Activated CD4-positive, alpha-beta memory T cell treated with anti-CD3 and anti-CD28 coated beads for 36 hours (primary cell): ENCODE measurements at regions of chr11 and their contacts with region 1.

Region 1: DNA sequence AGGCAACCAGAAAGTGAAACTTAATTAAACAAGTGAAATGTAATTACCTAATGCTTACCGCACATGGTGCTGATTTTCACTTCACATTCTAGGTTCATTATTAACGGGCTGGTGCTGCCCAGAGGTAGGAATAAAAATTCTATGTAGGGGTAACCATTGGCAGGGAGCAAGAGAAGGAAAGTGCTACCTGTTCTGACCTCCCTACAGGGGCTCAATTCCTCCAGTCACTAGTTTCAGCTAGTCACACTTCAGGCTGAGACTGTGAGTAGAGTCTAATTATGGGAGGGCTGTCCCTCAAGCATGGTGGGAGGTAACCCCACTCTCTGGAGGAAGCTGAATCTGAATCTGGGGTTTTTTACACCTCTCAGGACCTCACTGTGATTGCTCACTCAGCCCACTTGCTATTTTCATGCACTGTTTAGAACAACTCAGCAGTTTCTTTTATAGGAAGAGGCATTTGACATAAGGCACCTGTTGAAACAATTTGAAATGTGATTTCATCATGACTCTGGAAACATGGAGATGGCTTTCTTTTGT is 75.4 kb downstream of the MAML2 start:
- DNase-seq: peak; percentile 71
- H3K4me3 Mint-ChIP-seq: peak overlapping the region; percentile 42
- H3K27ac Mint-ChIP-seq: peak overlapping the region; percentile 84
- H3K4me1 Mint-ChIP-seq: peaks cover 90% of the 10 kb centered on the region
- H3K27me3 Mint-ChIP-seq: no peaks in the 10 kb centered on the region

Region 2: GRCh38 chr11:96098514-96099241 is 168.9 kb before region 1 on chr11:
- CTCF ChIA-PET with region 1: no interaction called
- POLR2A ChIA-PET with region 1: no interaction called
- intact Hi-C with region 1: no loop called
- DNase-seq: no peak
- H3K4me3 Mint-ChIP-seq: no peak overlapping the region
- H3K27ac Mint-ChIP-seq: no peak overlapping the region
- H3K4me1 Mint-ChIP-seq: peaks cover 41% of the 10 kb centered on the region
- H3K27me3 Mint-ChIP-seq: no peaks in the 10 kb centered on the region

Region 3: DNA sequence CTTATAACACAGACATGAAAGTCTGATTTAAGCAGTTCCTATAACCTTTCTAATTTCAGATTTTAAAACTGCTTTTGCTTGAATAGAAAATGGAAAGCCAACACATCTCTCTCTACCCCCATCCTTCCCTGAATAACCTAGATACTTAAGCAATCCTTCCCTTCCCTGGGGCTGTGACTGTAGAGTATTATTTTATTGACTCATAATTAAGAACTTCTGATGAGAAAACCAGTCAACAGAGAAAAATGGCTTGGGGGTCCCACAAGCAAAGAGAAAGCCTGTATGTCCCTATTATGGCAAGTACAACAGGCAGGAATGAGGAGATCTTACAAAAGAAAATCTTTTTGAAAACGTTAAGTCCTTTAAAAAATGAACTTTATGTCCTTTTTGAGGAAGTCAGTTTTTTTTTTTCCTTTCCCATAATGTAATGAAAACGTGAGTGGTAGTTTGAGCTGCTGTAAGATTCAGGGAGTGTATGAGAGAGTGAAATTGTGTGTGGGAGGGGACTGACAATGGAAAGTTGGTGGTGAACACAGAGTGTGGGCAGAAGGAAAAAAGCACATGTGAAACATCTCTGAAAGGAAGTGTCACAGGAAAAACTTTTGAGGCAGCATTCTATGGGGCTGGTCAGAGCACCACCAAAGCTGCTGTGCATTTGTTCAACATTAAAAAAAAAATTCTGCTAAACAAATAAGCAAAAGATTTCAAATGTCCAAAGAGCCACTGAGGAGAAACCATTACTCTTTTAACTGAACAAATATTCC is 79.1 kb before region 1 on chr11:
- CTCF ChIA-PET with region 1: no interaction called
- POLR2A ChIA-PET with region 1: no interaction called
- intact Hi-C with region 1: loop called (anchors 1 kb)
- DNase-seq: peak; percentile 59
- H3K4me3 Mint-ChIP-seq: peak overlapping the region; percentile 7
- H3K27ac Mint-ChIP-seq: peak overlapping the region; percentile 79
- H3K4me1 Mint-ChIP-seq: peaks cover 74% of the 10 kb centered on the region
- H3K27me3 Mint-ChIP-seq: no peaks in the 10 kb centered on the region

Region 4: DNA sequence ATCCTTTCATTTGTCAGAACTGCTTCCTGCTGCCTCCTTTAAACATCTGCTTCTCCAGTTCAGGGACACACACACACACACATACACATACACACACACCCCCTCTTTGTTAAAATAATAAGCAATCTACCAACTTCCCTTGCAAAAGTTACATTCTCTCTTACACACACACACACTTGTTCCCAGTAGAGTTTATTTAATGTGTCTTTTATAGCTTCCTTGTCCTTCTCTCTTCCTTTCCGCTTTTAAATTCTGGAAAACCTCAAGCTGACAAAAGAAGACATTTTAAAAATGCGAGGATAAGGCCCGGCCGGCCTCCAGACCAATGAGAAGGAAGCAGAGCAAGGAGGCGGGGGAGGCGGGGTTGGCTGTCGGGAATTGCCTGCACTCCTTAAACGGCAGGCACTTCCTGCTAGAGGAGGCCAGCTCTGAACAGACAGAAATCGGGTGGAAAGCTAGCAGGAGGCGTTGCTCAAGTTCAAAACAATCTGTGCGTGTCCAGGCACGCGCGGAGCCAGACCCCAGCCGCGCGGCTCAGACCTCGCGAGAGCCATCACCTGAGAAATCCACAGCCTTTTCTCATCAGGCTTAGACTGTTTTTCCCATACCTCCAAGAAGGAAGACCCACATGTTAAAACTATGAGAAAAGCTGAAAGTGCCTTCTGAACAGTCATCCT is 24.5 kb before region 1 on chr11:
- CTCF ChIA-PET with region 1: interaction called, 4 read pairs
- POLR2A ChIA-PET with region 1: interaction called, 7 read pairs
- intact Hi-C with region 1: loop called (anchors 1 kb)
- DNase-seq: peak; percentile 91
- H3K4me3 Mint-ChIP-seq: peak overlapping the region; percentile 78
- H3K27ac Mint-ChIP-seq: peak overlapping the region; percentile 95
- H3K4me1 Mint-ChIP-seq: peaks cover 53% of the 10 kb centered on the region
- H3K27me3 Mint-ChIP-seq: no peaks in the 10 kb centered on the region

Region 5: GRCh38 chr11:96287822-96288439 is 20.4 kb after region 1 on chr11:
- CTCF ChIA-PET with region 1: no interaction called
- POLR2A ChIA-PET with region 1: no interaction called
- intact Hi-C with region 1: loop called (anchors 1 kb)
- DNase-seq: no peak
- H3K4me3 Mint-ChIP-seq: no peak overlapping the region
- H3K27ac Mint-ChIP-seq: peak overlapping the region; percentile 31
- H3K4me1 Mint-ChIP-seq: peaks cover 79% of the 10 kb centered on the region
- H3K27me3 Mint-ChIP-seq: no peaks in the 10 kb centered on the region